H1 (cell line): ENCODE measurements at regions of chr10 and their contacts with region 1.

Region 1: GRCh38 chr10:116470768-116471415 is 43.2 kb downstream of the PNLIPRP3 start:
- DNase-seq: peak; percentile 21 to 62
- H3K4me3 ChIP-seq: no peak overlapping the region
- H3K27ac ChIP-seq: no peak overlapping the region
- H3K4me1 ChIP-seq: no peaks in the 10 kb centered on the region
- H3K27me3 ChIP-seq: no peaks in the 10 kb centered on the region
- CTCF ChIP-seq: peak; percentile 60 to 79 (median 68)
- EP300 ChIP-seq: no peak
- POLR2A ChIP-seq: no peak
- RAD21 ChIP-seq: peak; percentile 74 to 78

Region 2: DNA sequence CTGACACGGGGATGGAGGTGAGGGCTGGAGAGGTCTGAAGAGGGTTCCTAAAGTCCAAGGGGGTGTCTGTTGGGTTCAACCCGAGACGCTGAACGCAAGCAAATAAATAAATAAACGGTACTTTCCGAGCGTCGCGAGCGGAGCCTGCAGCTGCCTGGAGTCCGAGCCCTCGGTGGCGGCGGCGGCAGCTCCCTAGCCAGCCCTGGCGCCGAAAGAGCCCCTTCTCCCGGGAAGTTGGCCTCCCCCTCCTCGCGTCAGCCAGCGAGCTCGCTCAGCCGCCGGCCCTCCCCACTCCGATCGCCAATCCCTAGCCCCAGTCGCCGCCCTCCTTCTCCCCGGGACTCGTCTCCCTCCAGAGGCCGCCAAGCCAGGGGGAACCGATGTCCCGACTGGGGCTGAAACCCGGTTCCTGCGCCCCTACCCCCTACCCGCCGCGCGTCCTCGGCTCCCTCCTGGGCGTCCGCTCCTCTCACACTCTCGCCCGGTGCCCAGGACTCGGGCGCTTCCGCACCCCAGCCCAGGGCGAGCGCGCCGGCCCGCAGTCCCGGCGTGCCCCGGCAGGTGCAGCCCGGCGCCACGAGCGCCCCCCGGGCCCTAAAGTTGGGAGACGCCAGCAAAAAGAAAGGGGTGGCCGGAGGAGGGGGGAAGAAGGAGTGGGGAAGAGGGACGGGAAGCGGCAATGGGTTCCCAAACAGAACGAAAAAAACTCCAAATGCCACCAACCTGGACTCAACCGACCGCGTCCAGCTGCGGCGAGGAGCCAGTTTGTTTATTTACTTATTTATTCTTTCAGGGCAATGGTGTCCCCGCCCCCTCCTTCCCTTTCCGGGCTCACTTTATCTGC is 198.2 kb before region 1 on chr10 and contains the start of gene GFRA1:
- CTCF ChIA-PET with region 1: no interaction called
- POLR2A ChIA-PET with region 1: no interaction called
- DNase-seq: peak in 1 of 2 experiments; percentile 82
- H3K4me3 ChIP-seq: peak within 1 kb of the TSS; percentile 45 to 77 (median 70)
- H3K27ac ChIP-seq: no peak within 1 kb of the TSS
- H3K4me1 ChIP-seq: peaks cover 0 to 7% (median 3%) of the 10 kb centered on the region in 4 experiments; a peak in 5 of 7 replicates
- H3K27me3 ChIP-seq: peaks cover 42 to 79% (median 74%) of the 10 kb centered on the region in 4 experiments
- CTCF ChIP-seq: peak in 1 of 3 experiments; percentile 18; a peak in 1 of 4 replicates
- EP300 ChIP-seq: no peak
- POLR2A ChIP-seq: no peak
- RAD21 ChIP-seq: no peak; a peak in 1 of 4 replicates
- total RNA-seq, gene GFRA1: 2.0 TPM in 2 replicates

Region 3: DNA sequence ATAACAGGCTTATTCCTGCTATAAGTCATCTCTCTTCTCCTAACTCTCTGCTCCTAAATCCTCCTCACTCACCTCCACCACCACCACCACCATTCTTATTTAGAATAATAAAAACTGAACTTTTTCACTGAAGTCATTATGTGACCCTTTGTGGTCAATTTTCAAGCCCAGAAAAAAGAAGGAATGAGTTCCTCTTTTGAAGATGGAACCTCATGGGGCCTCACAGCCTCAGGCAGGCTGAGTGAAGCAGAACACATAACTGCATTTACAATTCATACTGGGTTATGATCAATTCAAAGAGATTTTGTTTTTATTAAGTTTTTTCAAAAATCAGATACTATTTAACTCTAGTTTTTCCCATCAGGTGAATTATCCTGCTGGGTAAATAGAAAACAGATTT is 13.4 kb before region 1 on chr10:
- CTCF ChIA-PET with region 1: interaction called, 11 read pairs
- POLR2A ChIA-PET with region 1: interaction called, 4 read pairs
- DNase-seq: no peak
- H3K4me3 ChIP-seq: no peak overlapping the region
- H3K27ac ChIP-seq: no peak overlapping the region
- H3K4me1 ChIP-seq: peaks cover 0 to 3% (median under 1%) of the 10 kb centered on the region in 4 experiments; a peak in 1 of 7 replicates
- H3K27me3 ChIP-seq: no peaks in the 10 kb centered on the region
- CTCF ChIP-seq: no peak
- EP300 ChIP-seq: no peak
- POLR2A ChIP-seq: no peak
- RAD21 ChIP-seq: no peak

Region 4: DNA sequence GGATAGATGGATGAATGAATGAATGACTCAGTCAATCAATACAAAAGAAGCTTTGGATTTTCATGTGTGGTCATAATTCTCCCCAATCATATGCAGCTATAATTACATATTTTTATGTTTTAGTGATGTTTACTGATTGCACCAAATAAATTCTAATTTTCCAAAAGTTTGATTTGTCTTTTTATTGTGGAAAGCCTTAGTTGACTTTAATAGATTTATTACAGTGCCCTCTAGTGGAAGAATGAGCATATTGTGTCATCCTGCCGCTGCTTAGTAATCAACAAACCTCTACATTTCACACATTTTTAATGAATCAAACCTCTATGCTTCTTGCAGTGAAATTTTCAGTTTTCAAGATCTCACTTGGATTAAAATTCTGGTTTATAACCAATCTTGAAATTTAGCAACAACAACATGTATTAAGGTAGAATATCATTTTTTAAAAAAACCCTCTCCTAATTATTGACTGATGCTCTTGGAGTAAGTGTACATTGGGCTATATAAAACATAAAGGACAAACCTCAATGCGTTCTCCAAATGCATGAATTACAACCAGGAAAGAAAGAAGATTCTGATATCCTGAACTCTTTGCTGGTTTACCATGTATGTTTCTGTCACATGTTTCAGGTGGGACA is 19.3 kb after region 1 on chr10:
- CTCF ChIA-PET with region 1: interaction called, 15 read pairs
- POLR2A ChIA-PET with region 1: no interaction called
- DNase-seq: no peak
- H3K4me3 ChIP-seq: no peak overlapping the region
- H3K27ac ChIP-seq: no peak overlapping the region
- H3K4me1 ChIP-seq: peaks cover 0 to 3% (median 0%) of the 10 kb centered on the region in 4 experiments; a peak in 2 of 7 replicates
- H3K27me3 ChIP-seq: no peaks in the 10 kb centered on the region
- CTCF ChIP-seq: peak in 2 of 3 experiments; percentile 27 to 52; a peak in 2 of 4 replicates
- EP300 ChIP-seq: no peak
- POLR2A ChIP-seq: no peak
- RAD21 ChIP-seq: peak in 1 of 2 experiments; percentile 39; a peak in 2 of 4 replicates